ENCODE measurements at regions of chr7 and their contacts with region 1.

Region 1: GRCh38 chr7:38796626-38797501 is 112.1 kb downstream of the VPS41 start:
- DNase-seq: peak; percentile 57 to 82
- H3K4me3 ChIP-seq: no peak overlapping the region
- H3K27ac ChIP-seq: no peak overlapping the region
- H3K4me1 ChIP-seq: no peaks in the 10 kb centered on the region
- H3K27me3 ChIP-seq: no peaks in the 10 kb centered on the region
- CTCF ChIP-seq: peak in 5 of 7 experiments; percentile 42 to 68 (median 63)
- EP300 ChIP-seq: no peak
- POLR2A ChIP-seq: no peak

Region 2: DNA sequence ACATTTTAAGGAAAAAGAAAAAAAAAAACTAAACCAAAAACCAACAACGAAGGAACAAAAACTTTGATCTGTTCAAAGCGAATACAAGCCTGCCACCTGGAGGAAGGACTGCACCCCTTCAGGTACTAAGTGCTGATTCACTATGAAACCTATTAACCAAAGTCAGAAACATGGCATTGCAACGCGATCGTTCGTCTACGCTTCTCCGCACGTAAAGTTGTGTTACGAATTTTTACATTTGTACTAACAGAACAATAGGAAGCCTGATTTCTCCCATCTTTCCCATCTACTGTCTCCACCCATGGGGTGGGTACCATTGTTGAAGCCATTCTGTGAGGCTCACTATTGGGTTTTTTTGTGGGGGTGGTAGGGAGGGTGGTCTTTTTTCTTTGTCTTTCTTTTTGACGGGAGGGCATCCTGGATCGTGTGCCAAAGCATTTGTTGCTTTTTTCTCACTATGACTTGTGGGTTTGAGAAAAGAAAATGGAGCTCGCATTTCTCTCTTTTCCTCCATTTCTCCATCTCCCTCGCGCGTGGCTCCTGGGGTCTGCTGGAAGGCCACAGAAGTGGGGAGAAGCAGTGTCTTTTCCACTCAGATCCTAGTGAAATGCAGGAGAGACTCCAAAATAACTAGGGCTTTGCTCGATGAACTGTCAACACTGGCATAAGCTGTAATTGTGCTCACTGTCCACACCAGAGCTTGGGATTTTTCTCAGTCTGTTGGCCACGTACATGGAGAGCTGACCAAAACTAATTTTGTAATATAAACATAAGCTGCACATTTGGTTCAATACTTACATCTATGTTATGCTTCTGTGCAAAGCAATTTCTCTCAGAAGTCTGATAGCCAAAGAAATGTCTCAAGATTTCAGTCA is 668.4 kb after region 1 on chr7:
- intact Hi-C with region 1: loop called (anchors 10 kb)
- DNase-seq: peak; percentile 48 to 88
- H3K4me3 ChIP-seq: peak overlapping the region in 2 of 4 donors; percentile 3 to 13
- H3K27ac ChIP-seq: no peak overlapping the region
- H3K4me1 ChIP-seq: peaks cover 0 to 11% (median 3%) of the 10 kb centered on the region in 4 donors
- H3K27me3 ChIP-seq: peaks cover 0 to 5% (median 0%) of the 10 kb centered on the region in 3 donors
- CTCF ChIP-seq: peak in 5 of 7 experiments; percentile 62 to 90 (median 68)
- EP300 ChIP-seq: no peak
- POLR2A ChIP-seq: no peak

Region 3: GRCh38 chr7:39517240-39517639 is 720.4 kb after region 1 on chr7:
- intact Hi-C with region 1: loop called (anchors 5 kb)
- DNase-seq: no peak
- H3K4me3 ChIP-seq: no peak overlapping the region
- H3K27ac ChIP-seq: no peak overlapping the region
- H3K4me1 ChIP-seq: peaks cover 0 to 9% (median 7%) of the 10 kb centered on the region in 4 donors
- H3K27me3 ChIP-seq: no peaks in the 10 kb centered on the region
- CTCF ChIP-seq: no peak
- EP300 ChIP-seq: no peak
- POLR2A ChIP-seq: no peak

Measured in stomach (tissue), 19 donors.